Naive thymus-derived CD4-positive, alpha-beta T cell (primary cell): ENCODE measurements at regions of chr12 and their contacts with region 1.

Region 1: GRCh38 chr12:69157023-69157655 is 82.2 kb upstream of the CPSF6 start:
- DNase-seq: peak; percentile 71 to 93 (median 83)
- ATAC-seq: peak; percentile 97
- H3K4me3 ChIP-seq: peak overlapping the region; percentile 45
- H3K4me3 Mint-ChIP-seq: peak overlapping the region in 8 of 10 donors; percentile 47 to 75 (median 67)
- H3K27ac ChIP-seq: no peak overlapping the region
- H3K27ac Mint-ChIP-seq: peak overlapping the region in 2 of 9 donors; percentile 6 to 65
- H3K4me1 ChIP-seq: peaks cover 0 to 6% of the 10 kb centered on the region in 2 donors
- H3K4me1 Mint-ChIP-seq: peaks cover 8 to 34% (median 31%) of the 10 kb centered on the region in 7 donors
- H3K27me3 ChIP-seq: no peaks in the 10 kb centered on the region
- H3K27me3 Mint-ChIP-seq: no peaks in the 10 kb centered on the region

Region 2: GRCh38 chr12:68759852-68760251 is 397.3 kb before region 1 on chr12:
- CTCF ChIA-PET with region 1: no interaction called
- POLR2A ChIA-PET with region 1: no interaction called
- intact Hi-C with region 1: no loop called
- DNase-seq: no peak
- ATAC-seq: no peak
- H3K4me3 ChIP-seq: no peak overlapping the region
- H3K4me3 Mint-ChIP-seq: no peak overlapping the region
- H3K27ac ChIP-seq: no peak overlapping the region
- H3K27ac Mint-ChIP-seq: no peak overlapping the region
- H3K4me1 ChIP-seq: no peaks in the 10 kb centered on the region
- H3K4me1 Mint-ChIP-seq: peaks cover 0 to 11% (median 3%) of the 10 kb centered on the region in 7 donors
- H3K27me3 ChIP-seq: no peaks in the 10 kb centered on the region
- H3K27me3 Mint-ChIP-seq: no peaks in the 10 kb centered on the region

Region 3: GRCh38 chr12:68863109-68863770 is 293.9 kb before region 1 on chr12:
- CTCF ChIA-PET with region 1: no interaction called
- POLR2A ChIA-PET with region 1: no interaction called
- intact Hi-C with region 1: loop called in 1 of 2 experiments (anchors 5 kb)
- DNase-seq: no peak
- ATAC-seq: no peak
- H3K4me3 ChIP-seq: no peak overlapping the region
- H3K4me3 Mint-ChIP-seq: no peak overlapping the region
- H3K27ac ChIP-seq: no peak overlapping the region
- H3K27ac Mint-ChIP-seq: no peak overlapping the region
- H3K4me1 ChIP-seq: no peaks in the 10 kb centered on the region
- H3K4me1 Mint-ChIP-seq: peaks cover 0 to 9% (median 0%) of the 10 kb centered on the region in 7 donors
- H3K27me3 ChIP-seq: no peaks in the 10 kb centered on the region
- H3K27me3 Mint-ChIP-seq: peaks cover 0 to 7% (median 0%) of the 10 kb centered on the region in 5 donors

Region 4: DNA sequence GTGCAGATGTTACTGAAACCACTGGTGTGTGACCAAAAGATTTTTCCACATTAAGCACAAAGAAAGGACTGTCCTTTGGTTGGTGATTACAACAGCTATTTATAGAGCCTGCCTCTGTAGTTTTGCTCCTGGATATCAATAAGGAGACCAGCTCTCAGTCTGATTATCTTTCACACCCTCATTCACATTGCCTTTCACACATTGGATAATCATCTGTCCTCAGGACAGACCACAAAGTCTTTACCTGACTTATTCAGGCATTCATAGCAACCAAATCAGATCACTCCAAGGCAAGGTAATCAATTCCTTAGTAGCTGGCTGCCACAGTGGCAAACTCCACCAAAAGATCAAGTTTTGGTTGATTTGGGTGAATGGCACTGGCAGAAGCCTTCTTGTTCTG is 22.6 kb after region 1 on chr12:
- CTCF ChIA-PET with region 1: no interaction called
- POLR2A ChIA-PET with region 1: no interaction called
- intact Hi-C with region 1: no loop called
- DNase-seq: no peak
- ATAC-seq: no peak
- H3K4me3 ChIP-seq: no peak overlapping the region
- H3K4me3 Mint-ChIP-seq: no peak overlapping the region
- H3K27ac ChIP-seq: no peak overlapping the region
- H3K27ac Mint-ChIP-seq: no peak overlapping the region
- H3K4me1 ChIP-seq: no peaks in the 10 kb centered on the region
- H3K4me1 Mint-ChIP-seq: no peaks in the 10 kb centered on the region
- H3K27me3 ChIP-seq: no peaks in the 10 kb centered on the region
- H3K27me3 Mint-ChIP-seq: peaks cover 0 to 7% (median 0%) of the 10 kb centered on the region in 5 donors

Region 5: GRCh38 chr12:69239352-69239921 is 82.3 kb after region 1 on chr12 and contains the start of gene CPSF6:
- CTCF ChIA-PET with region 1: interaction called, 4 read pairs
- POLR2A ChIA-PET with region 1: interaction called, 15 read pairs
- intact Hi-C with region 1: loop called (anchors 1 kb)
- DNase-seq: peak; percentile 93 to 97 (median 95)
- ATAC-seq: peak; percentile 96
- H3K4me3 ChIP-seq: peak within 1 kb of the TSS; percentile 86
- H3K4me3 Mint-ChIP-seq: peak within 1 kb of the TSS; percentile 94 to 100 (median 98)
- H3K27ac ChIP-seq: peak within 1 kb of the TSS; percentile 90
- H3K27ac Mint-ChIP-seq: peak within 1 kb of the TSS; percentile 96 to 100 (median 99)
- H3K4me1 ChIP-seq: peaks cover 32 to 37% of the 10 kb centered on the region in 2 donors
- H3K4me1 Mint-ChIP-seq: peaks cover 32 to 58% (median 54%) of the 10 kb centered on the region in 7 donors
- H3K27me3 ChIP-seq: no peaks in the 10 kb centered on the region
- H3K27me3 Mint-ChIP-seq: no peaks in the 10 kb centered on the region
- total RNA-seq, gene CPSF6: 86.8 to 127 (median 96.5) TPM

Region 6: GRCh38 chr12:69290545-69291277 is 133.6 kb after region 1 on chr12:
- CTCF ChIA-PET with region 1: interaction called, 3 read pairs
- POLR2A ChIA-PET with region 1: no interaction called
- intact Hi-C with region 1: loop called in 1 of 2 experiments (anchors 1 kb)
- DNase-seq: peak; percentile 57 to 82 (median 75)
- ATAC-seq: peak; percentile 100
- H3K4me3 ChIP-seq: no peak overlapping the region
- H3K4me3 Mint-ChIP-seq: peak overlapping the region in 2 of 10 donors; percentile 14 to 37
- H3K27ac ChIP-seq: no peak overlapping the region
- H3K27ac Mint-ChIP-seq: peak overlapping the region in 1 of 9 donors; percentile 59
- H3K4me1 ChIP-seq: peaks cover 8% of the 10 kb centered on the region in 2 donors
- H3K4me1 Mint-ChIP-seq: peaks cover 6 to 36% (median 22%) of the 10 kb centered on the region in 7 donors
- H3K27me3 ChIP-seq: no peaks in the 10 kb centered on the region
- H3K27me3 Mint-ChIP-seq: peaks cover 0 to 49% (median 18%) of the 10 kb centered on the region in 5 donors

Region 7: DNA sequence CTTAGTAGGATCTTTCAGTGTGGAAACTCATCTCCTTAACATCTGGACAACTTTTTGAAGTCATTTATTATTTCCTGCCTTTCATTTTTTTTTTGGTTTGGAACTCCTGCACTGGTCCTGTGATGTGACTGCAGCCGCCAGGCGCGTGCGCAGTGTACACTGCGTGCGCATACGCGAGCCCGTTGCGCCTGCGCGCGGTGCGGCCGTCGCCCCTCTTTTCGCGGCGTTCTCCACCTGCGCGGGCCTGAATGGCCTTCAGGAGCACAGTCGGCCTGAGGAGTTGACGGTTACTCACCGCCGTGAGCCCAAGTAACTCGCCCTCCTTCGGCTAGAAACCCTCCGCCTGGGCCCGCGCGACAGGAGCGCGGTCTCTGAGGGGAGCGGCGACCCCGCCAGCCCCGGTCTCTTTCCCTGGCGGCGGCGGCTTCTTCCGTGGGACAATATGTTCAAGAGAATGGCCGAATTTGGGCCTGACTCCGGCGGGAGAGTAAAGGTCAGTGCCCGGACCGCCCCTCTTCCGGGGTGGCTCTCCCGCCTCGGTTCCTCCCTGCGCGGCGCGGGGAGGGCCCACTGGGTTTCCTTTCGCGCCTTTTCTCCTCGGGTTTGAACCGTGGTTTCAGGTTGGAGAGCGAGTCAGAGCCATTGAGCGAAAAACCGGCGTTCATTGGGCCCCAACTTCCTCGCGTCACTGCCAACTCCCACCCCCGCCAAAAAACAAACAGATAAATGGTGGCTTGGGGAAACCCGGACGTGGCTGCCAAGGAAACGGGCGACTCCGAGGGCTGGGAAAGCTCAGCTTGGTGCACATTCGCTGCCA is 202.6 kb after region 1 on chr12 and contains the start of gene YEATS4:
- CTCF ChIA-PET with region 1: interaction called, 7 read pairs
- POLR2A ChIA-PET with region 1: no interaction called
- intact Hi-C with region 1: loop called (anchors 1 kb)
- DNase-seq: peak; percentile 73 to 93 (median 84)
- ATAC-seq: peak; percentile 86
- H3K4me3 ChIP-seq: peak within 1 kb of the TSS; percentile 76
- H3K4me3 Mint-ChIP-seq: peak within 1 kb of the TSS; percentile 82 to 93 (median 89)
- H3K27ac ChIP-seq: peak within 1 kb of the TSS; percentile 93
- H3K27ac Mint-ChIP-seq: peak within 1 kb of the TSS; percentile 80 to 96 (median 91)
- H3K4me1 ChIP-seq: peaks cover 5 to 6% of the 10 kb centered on the region in 2 donors
- H3K4me1 Mint-ChIP-seq: peaks cover 11 to 32% (median 25%) of the 10 kb centered on the region in 7 donors
- H3K27me3 ChIP-seq: no peaks in the 10 kb centered on the region
- H3K27me3 Mint-ChIP-seq: peaks cover 0 to 3% (median 0%) of the 10 kb centered on the region in 5 donors
- total RNA-seq, gene YEATS4: 16.5 to 34.9 (median 21.4) TPM

Region 8: DNA sequence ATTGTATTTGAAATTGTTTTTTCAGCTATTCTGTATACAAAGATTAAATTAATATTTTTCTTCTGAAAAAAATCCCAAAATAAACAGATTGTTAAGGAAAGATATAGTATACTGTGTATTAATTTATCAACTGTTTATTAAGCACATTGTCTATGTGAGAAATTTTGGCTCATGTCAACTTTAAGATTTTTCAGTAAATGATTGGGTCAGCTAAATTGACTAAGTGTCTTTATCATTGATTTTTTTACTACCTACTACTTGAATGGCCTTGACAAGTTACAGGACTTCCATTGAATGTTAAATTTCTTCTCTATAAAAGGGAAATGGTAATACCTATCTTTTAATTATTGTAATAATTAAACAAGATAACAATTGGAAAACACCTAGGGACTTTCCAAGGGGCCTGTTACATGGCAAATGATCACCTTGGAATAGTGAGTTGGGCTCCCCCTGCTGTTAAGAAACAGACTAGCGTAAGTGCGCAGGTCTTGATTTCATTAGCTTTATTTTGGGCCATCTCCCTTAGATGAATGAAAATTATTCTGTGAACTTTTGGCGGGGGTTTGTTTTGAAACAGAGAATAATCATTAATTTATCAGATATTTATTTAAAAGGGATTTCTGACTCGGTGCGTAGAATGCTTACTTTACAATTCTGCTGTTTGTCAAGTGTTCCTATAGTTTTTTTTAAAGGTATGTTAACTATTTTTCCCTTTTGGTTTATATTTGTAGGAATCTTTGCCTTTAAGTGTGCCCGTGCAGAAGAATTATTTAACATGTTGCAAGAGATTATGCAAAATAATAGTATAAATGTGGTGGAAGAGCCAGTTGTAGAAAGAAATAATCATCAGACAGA is 413.6 kb after region 1 on chr12:
- CTCF ChIA-PET with region 1: interaction called, 18 read pairs
- POLR2A ChIA-PET with region 1: interaction called, 3 read pairs
- intact Hi-C with region 1: loop called (anchors 1 kb)
- DNase-seq: peak in 8 of 9 donors; percentile 31 to 70 (median 58)
- ATAC-seq: peak; percentile 88
- H3K4me3 ChIP-seq: no peak overlapping the region
- H3K4me3 Mint-ChIP-seq: no peak overlapping the region
- H3K27ac ChIP-seq: peak overlapping the region; percentile 56
- H3K27ac Mint-ChIP-seq: no peak overlapping the region
- H3K4me1 ChIP-seq: no peaks in the 10 kb centered on the region
- H3K4me1 Mint-ChIP-seq: peaks cover 0 to 16% (median 0%) of the 10 kb centered on the region in 7 donors
- H3K27me3 ChIP-seq: no peaks in the 10 kb centered on the region
- H3K27me3 Mint-ChIP-seq: no peaks in the 10 kb centered on the region

Region 9: GRCh38 chr12:69639400-69640016 is 482.4 kb after region 1 on chr12:
- CTCF ChIA-PET with region 1: interaction called, 4 read pairs
- POLR2A ChIA-PET with region 1: no interaction called
- intact Hi-C with region 1: loop called (anchors 1 kb)
- DNase-seq: peak; percentile 10 to 56 (median 47)
- ATAC-seq: peak; percentile 77
- H3K4me3 ChIP-seq: no peak overlapping the region
- H3K4me3 Mint-ChIP-seq: no peak overlapping the region
- H3K27ac ChIP-seq: no peak overlapping the region
- H3K27ac Mint-ChIP-seq: no peak overlapping the region
- H3K4me1 ChIP-seq: no peaks in the 10 kb centered on the region
- H3K4me1 Mint-ChIP-seq: no peaks in the 10 kb centered on the region
- H3K27me3 ChIP-seq: no peaks in the 10 kb centered on the region
- H3K27me3 Mint-ChIP-seq: peaks cover 0 to 4% (median 0%) of the 10 kb centered on the region in 5 donors